AG04449 (cell line): ENCODE measurements at regions of chr3 and their contacts with region 1.

Region 1: DNA sequence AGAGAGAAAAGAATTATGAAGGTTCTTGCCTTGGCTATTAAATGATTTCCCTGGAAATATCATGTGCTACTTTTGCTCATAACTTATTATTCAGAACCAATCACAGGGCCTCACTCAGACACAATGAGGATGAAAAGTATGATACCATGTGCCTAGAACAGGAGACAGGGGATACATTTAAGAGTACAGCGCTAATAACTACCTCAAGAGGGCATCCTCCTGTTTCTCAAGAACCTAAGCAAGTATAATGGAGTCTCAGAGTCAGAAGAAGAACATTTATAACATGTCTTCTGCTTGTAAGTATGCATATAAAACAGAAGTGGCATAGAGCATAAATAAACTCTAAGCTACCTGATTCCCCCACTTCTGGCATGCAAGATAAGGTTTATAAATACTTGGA is 125.4 kb upstream of the MME start:
- DNase-seq: peak; percentile 53
- H3K4me3 ChIP-seq: no peak overlapping the region
- CTCF ChIP-seq: peak; percentile 61

Region 2: GRCh38 chr3:154967090-154967489 is 12.3 kb after region 1 on chr3:
- CTCF ChIA-PET with region 1: interaction called, 11 read pairs
- POLR2A ChIA-PET with region 1: no interaction called
- DNase-seq: no peak
- H3K4me3 ChIP-seq: no peak overlapping the region
- CTCF ChIP-seq: no peak

Region 3: DNA sequence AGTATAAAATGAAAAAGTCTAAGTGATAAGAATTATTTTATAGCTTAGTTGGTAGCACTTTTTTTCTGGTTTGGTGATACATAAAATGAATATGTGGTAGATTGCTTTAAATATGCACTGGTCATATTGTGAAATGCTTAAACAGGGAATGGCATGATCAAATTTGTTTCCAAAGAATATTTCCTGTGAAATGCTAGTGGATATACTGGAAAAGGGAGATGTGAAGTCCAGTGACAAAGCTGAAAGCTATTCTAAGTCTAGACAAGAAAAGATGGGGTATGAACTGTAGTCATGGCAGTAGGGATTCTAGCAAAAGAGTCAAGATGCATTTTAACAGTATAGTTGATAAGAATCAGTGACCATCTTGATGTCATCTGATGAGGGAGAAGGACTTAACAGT is 26.4 kb after region 1 on chr3:
- CTCF ChIA-PET with region 1: no interaction called
- POLR2A ChIA-PET with region 1: no interaction called
- DNase-seq: peak; percentile 61
- H3K4me3 ChIP-seq: no peak overlapping the region
- CTCF ChIP-seq: no peak

Region 4: GRCh38 chr3:155101398-155101797 is 146.6 kb after region 1 on chr3:
- CTCF ChIA-PET with region 1: interaction called, 13 read pairs
- POLR2A ChIA-PET with region 1: no interaction called
- DNase-seq: no peak
- H3K4me3 ChIP-seq: no peak overlapping the region
- CTCF ChIP-seq: no peak

Region 5: GRCh38 chr3:155173386-155174170 is 218.8 kb after region 1 on chr3:
- CTCF ChIA-PET with region 1: interaction called, 11 read pairs
- POLR2A ChIA-PET with region 1: no interaction called
- DNase-seq: no peak
- H3K4me3 ChIP-seq: no peak overlapping the region
- CTCF ChIP-seq: no peak